GM13977 (cell line): ENCODE measurements at regions of chr2 and their contacts with region 1.

Region 1: DNA sequence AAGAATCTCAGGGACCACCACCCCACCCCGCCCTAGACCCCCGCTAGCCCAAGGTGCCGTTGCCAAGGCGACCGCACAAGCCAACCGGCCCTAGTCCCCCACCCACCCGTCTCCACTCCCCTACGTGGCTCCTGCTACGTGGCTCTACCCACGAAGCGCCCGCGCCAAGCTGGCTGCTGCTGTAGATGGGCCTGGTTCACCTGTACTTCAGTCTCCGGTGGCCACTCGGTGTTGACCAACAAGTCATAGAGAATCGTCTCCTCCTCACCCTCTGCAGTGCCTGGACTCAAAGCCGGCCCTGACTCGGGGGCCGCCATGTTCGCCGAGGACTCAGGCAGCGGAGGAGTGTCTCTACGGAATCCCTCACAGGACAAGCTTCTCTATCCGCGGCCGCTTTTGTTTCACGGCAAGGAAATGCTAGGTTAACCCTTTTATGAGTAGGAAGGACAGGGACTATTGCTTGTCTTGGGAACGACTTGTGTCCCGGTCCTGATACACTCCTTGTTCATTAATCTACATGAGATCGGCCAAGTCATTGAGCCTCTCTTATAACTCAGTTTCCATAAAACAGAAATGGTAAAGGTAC is at the start of gene NBAS:
- DNase-seq: peak; percentile 78
- CTCF ChIP-seq: no peak

Region 2: DNA sequence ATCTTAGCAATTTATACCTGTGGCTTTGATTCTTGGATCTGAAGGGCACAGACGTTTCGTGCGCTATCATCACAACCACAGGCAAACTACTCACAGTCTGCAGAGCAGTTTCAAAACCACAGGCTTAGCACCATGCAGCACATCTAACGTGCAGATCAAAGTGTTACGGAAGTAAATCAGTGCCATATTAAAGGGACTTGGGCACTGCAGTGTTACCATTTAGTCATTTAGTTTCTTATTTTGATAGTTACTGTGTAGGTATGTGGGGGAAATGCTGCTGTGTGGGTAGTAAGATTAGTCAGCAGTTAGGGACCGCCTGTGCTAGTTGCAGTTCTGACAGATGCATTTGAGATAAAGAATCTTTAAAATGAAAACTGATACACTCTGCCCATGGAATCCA is 384.0 kb before region 1 on chr2:
- in situ Hi-C with region 1: loop called (anchors 25 kb)
- DNase-seq: peak; percentile 62
- CTCF ChIP-seq: no peak